ENCODE measurements at regions of chr11 and their contacts with region 1.

Region 1: GRCh38 chr11:95764267-95764898 is 25.2 kb downstream of the FAM76B start:
- DNase-seq: peak; percentile 27 to 55 (median 42)
- H3K4me3 ChIP-seq: no peak overlapping the region
- H3K4me3 Mint-ChIP-seq: no peak overlapping the region
- H3K27ac ChIP-seq: no peak overlapping the region
- H3K27ac Mint-ChIP-seq: no peak overlapping the region
- H3K4me1 ChIP-seq: peaks cover 16 to 19% of the 10 kb centered on the region in 2 donors
- H3K4me1 Mint-ChIP-seq: peaks cover 17% of the 10 kb centered on the region
- H3K27me3 ChIP-seq: no peaks in the 10 kb centered on the region
- H3K27me3 Mint-ChIP-seq: peaks cover 0 to 2% (median 1%) of the 10 kb centered on the region in 3 donors
- CTCF ChIP-seq: peak; percentile 82

Region 2: GRCh38 chr11:94623120-94623735 is 1141.2 kb before region 1 on chr11:
- intact Hi-C with region 1: loop called in 1 of 2 experiments (anchors 10 kb)
- DNase-seq: peak; percentile 58 to 73 (median 71)
- H3K4me3 ChIP-seq: no peak overlapping the region
- H3K4me3 Mint-ChIP-seq: peak overlapping the region in 1 of 2 donors; percentile 49
- H3K27ac ChIP-seq: no peak overlapping the region
- H3K27ac Mint-ChIP-seq: peak overlapping the region in 4 of 7 donors; percentile 7 to 78 (median 50)
- H3K4me1 ChIP-seq: no peaks in the 10 kb centered on the region
- H3K4me1 Mint-ChIP-seq: peaks cover 2% of the 10 kb centered on the region
- H3K27me3 ChIP-seq: no peaks in the 10 kb centered on the region
- H3K27me3 Mint-ChIP-seq: no peaks in the 10 kb centered on the region
- CTCF ChIP-seq: peak; percentile 85

Region 3: GRCh38 chr11:95067039-95067840 is 697.1 kb before region 1 on chr11:
- intact Hi-C with region 1: loop called in 1 of 2 experiments (anchors 5 kb)
- DNase-seq: peak; percentile 55 to 66 (median 64)
- H3K4me3 ChIP-seq: peak overlapping the region; percentile 80 to 93 (median 90)
- H3K4me3 Mint-ChIP-seq: peak overlapping the region; percentile 98 to 100
- H3K27ac ChIP-seq: peak overlapping the region; percentile 85 to 87
- H3K27ac Mint-ChIP-seq: peak overlapping the region; percentile 89 to 97 (median 93)
- H3K4me1 ChIP-seq: peaks cover 24 to 30% of the 10 kb centered on the region in 2 donors
- H3K4me1 Mint-ChIP-seq: peaks cover 27% of the 10 kb centered on the region
- H3K27me3 ChIP-seq: no peaks in the 10 kb centered on the region
- H3K27me3 Mint-ChIP-seq: peaks cover 0 to 2% (median 2%) of the 10 kb centered on the region in 3 donors
- CTCF ChIP-seq: peak; percentile 57

Region 4: DNA sequence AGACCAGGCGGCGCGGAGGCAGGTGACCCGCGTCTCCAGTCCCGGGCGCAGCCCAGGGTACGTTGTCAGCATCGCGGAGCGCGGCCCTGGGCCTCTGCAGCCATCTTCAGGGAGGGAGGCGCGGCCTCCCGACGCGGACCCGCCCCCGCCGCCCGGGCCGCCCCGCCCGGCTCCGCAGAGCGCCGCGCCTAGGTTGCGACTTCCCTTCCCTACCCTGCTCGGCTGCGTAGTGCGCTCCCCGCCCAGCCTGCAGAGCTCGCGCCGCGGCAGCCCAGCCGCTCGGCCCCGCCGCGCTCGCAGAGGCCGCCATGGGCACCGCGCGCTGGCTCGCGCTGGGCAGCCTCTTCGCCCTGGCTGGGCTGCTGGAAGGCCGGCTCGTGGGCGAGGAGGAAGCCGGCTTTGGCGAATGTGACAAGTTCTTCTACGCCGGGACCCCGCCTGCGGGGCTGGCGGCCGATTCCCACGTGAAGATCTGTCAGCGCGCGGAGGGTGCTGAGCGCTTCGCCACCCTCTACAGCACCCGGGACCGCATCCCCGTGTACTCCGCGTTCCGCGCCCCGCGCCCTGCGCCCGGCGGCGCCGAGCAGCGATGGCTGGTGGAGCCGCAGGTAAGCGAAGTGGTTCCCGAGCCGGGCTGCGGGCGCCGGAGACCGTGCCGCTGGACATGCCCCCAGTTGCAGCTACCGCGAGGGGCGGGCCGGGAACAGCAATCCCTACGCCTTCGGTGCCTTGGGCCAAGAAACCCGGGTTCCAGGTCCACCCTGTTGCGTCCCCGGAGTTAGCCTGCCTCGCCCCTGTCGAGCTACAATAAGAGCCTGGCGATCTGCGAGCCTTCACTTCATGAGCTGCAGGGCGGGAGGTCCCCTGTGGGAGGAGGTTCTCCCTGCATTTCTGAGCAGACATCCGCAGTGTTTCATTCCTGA is 674.5 kb before region 1 on chr11 and contains the start of gene ENDOD1:
- intact Hi-C with region 1: loop called in 1 of 2 experiments (anchors 10 kb)
- DNase-seq: peak; percentile 74 to 77 (median 76)
- H3K4me3 ChIP-seq: peak within 1 kb of the TSS; percentile 62 to 88 (median 82)
- H3K4me3 Mint-ChIP-seq: peak within 1 kb of the TSS; percentile 90 to 95
- H3K27ac ChIP-seq: peak within 1 kb of the TSS; percentile 47 to 83
- H3K27ac Mint-ChIP-seq: peak within 1 kb of the TSS; percentile 85 to 94 (median 90)
- H3K4me1 ChIP-seq: peaks cover 14 to 23% of the 10 kb centered on the region in 2 donors
- H3K4me1 Mint-ChIP-seq: peaks cover 23% of the 10 kb centered on the region
- H3K27me3 ChIP-seq: peaks cover 7 to 8% of the 10 kb centered on the region in 2 donors
- H3K27me3 Mint-ChIP-seq: peaks cover 15 to 19% (median 17%) of the 10 kb centered on the region in 3 donors
- CTCF ChIP-seq: no peak
- polyA plus RNA-seq, gene ENDOD1: 1.3 to 3.4 (median 3.2) TPM

Region 5: GRCh38 chr11:95715777-95716241 is 48.6 kb before region 1 on chr11:
- intact Hi-C with region 1: no loop called
- DNase-seq: no peak
- H3K4me3 ChIP-seq: no peak overlapping the region
- H3K4me3 Mint-ChIP-seq: no peak overlapping the region
- H3K27ac ChIP-seq: no peak overlapping the region
- H3K27ac Mint-ChIP-seq: peak overlapping the region in 1 of 7 donors; percentile 6
- H3K4me1 ChIP-seq: no peaks in the 10 kb centered on the region
- H3K4me1 Mint-ChIP-seq: peaks cover 5% of the 10 kb centered on the region
- H3K27me3 ChIP-seq: no peaks in the 10 kb centered on the region
- H3K27me3 Mint-ChIP-seq: peaks cover 0 to 2% (median 0%) of the 10 kb centered on the region in 3 donors
- CTCF ChIP-seq: no peak

Measured in CD14-positive monocyte (primary cell).